Endothelial cell of umbilical vein (primary cell): ENCODE measurements at regions of chr6 and their contacts with region 1.

Region 1: GRCh38 chr6:18371010-18371409 is 16.1 kb upstream of the RNF144B start:
- DNase-seq: peak; percentile 87
- H3K4me3 ChIP-seq: peak overlapping the region in 1 of 3 experiments; percentile 5
- H3K27ac ChIP-seq: peak overlapping the region; percentile 83
- H3K4me1 ChIP-seq: peaks cover 43% of the 10 kb centered on the region
- H3K27me3 ChIP-seq: no peaks in the 10 kb centered on the region
- CTCF ChIP-seq: no peak
- POLR2A ChIP-seq: peak; percentile 44

Region 2: GRCh38 chr6:18323935-18324705 is 46.9 kb before region 1 on chr6:
- CTCF ChIA-PET with region 1: interaction called, 5 read pairs
- POLR2A ChIA-PET with region 1: no interaction called
- dilution Hi-C with region 1: no loop called
- intact Hi-C with region 1: loop called (anchors 5 kb)
- DNase-seq: peak; percentile 69
- H3K4me3 ChIP-seq: no peak overlapping the region
- H3K27ac ChIP-seq: no peak overlapping the region
- H3K4me1 ChIP-seq: peaks cover 16% of the 10 kb centered on the region
- H3K27me3 ChIP-seq: no peaks in the 10 kb centered on the region
- CTCF ChIP-seq: peak; percentile 48 to 49
- POLR2A ChIP-seq: no peak

Region 3: GRCh38 chr6:18343741-18344140 is 27.3 kb before region 1 on chr6:
- CTCF ChIA-PET with region 1: interaction called, 3 read pairs
- POLR2A ChIA-PET with region 1: no interaction called
- dilution Hi-C with region 1: no loop called
- intact Hi-C with region 1: loop called (anchors 1 kb)
- DNase-seq: peak; percentile 91
- H3K4me3 ChIP-seq: no peak overlapping the region
- H3K27ac ChIP-seq: peak overlapping the region; percentile 69
- H3K4me1 ChIP-seq: peaks cover 16% of the 10 kb centered on the region
- H3K27me3 ChIP-seq: no peaks in the 10 kb centered on the region
- CTCF ChIP-seq: no peak
- POLR2A ChIP-seq: no peak

Region 4: GRCh38 chr6:18400831-18401446 is 29.9 kb after region 1 on chr6:
- CTCF ChIA-PET with region 1: interaction called, 4 read pairs
- POLR2A ChIA-PET with region 1: no interaction called
- dilution Hi-C with region 1: no loop called
- intact Hi-C with region 1: loop called (anchors 1 kb)
- DNase-seq: peak; percentile 92
- H3K4me3 ChIP-seq: no peak overlapping the region
- H3K27ac ChIP-seq: peak overlapping the region; percentile 84
- H3K4me1 ChIP-seq: peaks cover 97% of the 10 kb centered on the region
- H3K27me3 ChIP-seq: no peaks in the 10 kb centered on the region
- CTCF ChIP-seq: no peak
- POLR2A ChIP-seq: peak; percentile 34